Calu3 (cell line): ENCODE measurements at regions of chr6 and their contacts with region 1.

Region 1: DNA sequence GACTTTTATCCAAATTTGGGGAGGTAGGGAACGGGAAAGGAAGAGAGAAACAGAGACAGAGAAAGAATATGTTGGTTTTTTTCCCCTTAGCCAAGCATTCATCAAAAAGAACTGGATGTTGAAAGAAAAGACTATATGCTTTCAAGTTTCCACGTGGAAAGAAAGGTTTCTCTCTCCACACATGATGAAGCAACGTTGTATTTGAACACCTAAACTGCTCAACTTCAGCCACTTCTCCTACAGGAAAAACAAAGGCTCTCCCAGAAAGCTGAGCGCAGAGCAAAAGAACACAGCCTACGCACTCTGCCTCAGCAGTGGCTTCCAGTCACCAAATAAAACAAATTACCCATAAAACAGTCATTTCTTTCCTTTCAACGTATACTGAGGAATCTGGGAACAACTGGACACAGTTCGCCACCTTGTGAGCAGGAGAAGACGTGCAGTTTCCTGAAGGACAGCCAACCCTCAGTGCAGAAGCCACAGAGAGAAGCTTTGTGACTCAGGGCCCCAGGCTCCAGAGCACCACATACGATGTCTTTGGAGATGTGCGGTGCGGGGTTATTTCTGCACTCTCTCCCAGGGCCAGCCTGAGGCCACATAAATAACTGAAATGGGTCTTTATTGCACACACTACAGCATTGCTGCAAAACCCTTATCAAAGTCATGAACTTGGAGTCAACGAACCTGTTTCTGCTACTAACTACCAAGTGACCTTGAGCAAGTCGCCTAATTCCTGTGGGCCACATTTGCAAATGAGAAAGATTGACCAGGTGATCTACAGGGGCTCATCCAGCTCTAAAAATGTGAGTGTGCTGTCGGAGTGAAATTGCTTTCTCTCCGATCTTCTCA is 10.1 kb downstream of the IL17F start:
- DNase-seq: peak; percentile 61
- H3K4me3 Mint-ChIP-seq: no peak overlapping the region
- H3K27ac Mint-ChIP-seq: no peak overlapping the region
- H3K4me1 Mint-ChIP-seq: peaks cover 7% of the 10 kb centered on the region
- H3K27me3 Mint-ChIP-seq: peaks cover 49% of the 10 kb centered on the region
- CTCF ChIP-seq: peak; percentile 64

Region 2: DNA sequence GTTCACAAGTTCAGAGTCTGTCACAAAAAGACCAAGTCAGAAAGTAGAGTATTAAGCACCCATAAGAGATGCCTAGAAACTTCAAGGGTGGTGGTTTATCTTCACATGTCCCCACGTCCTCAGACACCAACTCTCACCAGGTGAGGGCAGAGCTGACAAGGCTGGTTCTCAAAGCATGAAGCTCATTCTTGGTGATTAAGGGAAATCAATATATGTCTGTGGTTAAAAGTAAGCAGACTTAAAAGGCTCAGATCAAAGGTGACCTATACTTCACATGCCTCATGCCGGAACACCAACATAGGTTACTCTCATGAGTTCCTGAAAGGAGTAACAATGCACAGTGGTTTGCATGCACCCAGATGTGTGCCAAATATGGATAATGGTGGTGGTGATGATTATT is 21.1 kb before region 1 on chr6:
- CTCF ChIA-PET with region 1: interaction called, 16 read pairs
- intact Hi-C with region 1: loop called (anchors 2 kb)
- DNase-seq: peak; percentile 48
- H3K4me3 Mint-ChIP-seq: no peak overlapping the region
- H3K27ac Mint-ChIP-seq: no peak overlapping the region
- H3K4me1 Mint-ChIP-seq: peaks cover 14% of the 10 kb centered on the region
- H3K27me3 Mint-ChIP-seq: peaks cover 21% of the 10 kb centered on the region
- CTCF ChIP-seq: no peak

Region 3: DNA sequence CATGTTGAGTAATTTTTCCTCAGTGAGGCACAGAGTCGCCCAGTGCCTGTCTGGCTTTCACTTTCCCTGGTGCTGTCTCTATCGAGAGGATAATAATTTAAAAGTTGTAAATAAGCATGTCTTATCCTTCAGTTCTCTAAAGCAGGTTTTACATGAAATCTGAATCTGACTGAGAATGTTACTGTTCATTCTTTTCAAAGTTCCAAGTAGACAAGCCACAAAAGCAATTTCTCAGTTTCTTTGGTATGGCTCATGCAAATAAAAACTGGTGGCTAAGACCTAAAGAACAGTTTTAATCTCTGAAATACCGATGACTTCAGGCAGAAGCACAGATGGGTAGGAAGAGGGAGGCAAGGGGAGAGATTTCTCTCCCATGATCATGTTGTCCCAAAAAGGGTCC is 1002.0 kb after region 1 on chr6:
- CTCF ChIA-PET with region 1: no interaction called
- intact Hi-C with region 1: no loop called
- DNase-seq: no peak
- H3K4me3 Mint-ChIP-seq: no peak overlapping the region
- H3K27ac Mint-ChIP-seq: no peak overlapping the region
- H3K4me1 Mint-ChIP-seq: no peaks in the 10 kb centered on the region
- H3K27me3 Mint-ChIP-seq: no peaks in the 10 kb centered on the region
- CTCF ChIP-seq: no peak